CD14-positive monocyte (primary cell): ENCODE measurements at regions of chr16 and their contacts with region 1.

Region 1: GRCh38 chr16:15636392-15636873 is 6.5 kb downstream of the MARF1 start:
- DNase-seq: no peak
- H3K4me3 ChIP-seq: no peak overlapping the region
- H3K4me3 Mint-ChIP-seq: peak overlapping the region in 1 of 2 donors; percentile 16
- H3K27ac ChIP-seq: peak overlapping the region in 1 of 2 donors; percentile 65
- H3K27ac Mint-ChIP-seq: peak overlapping the region in 5 of 7 donors; percentile 14 to 82 (median 47)
- H3K4me1 ChIP-seq: peaks cover 2 to 16% of the 10 kb centered on the region in 2 donors
- H3K4me1 Mint-ChIP-seq: peaks cover 16% of the 10 kb centered on the region
- H3K27me3 ChIP-seq: no peaks in the 10 kb centered on the region
- H3K27me3 Mint-ChIP-seq: no peaks in the 10 kb centered on the region
- CTCF ChIP-seq: no peak

Region 2: DNA sequence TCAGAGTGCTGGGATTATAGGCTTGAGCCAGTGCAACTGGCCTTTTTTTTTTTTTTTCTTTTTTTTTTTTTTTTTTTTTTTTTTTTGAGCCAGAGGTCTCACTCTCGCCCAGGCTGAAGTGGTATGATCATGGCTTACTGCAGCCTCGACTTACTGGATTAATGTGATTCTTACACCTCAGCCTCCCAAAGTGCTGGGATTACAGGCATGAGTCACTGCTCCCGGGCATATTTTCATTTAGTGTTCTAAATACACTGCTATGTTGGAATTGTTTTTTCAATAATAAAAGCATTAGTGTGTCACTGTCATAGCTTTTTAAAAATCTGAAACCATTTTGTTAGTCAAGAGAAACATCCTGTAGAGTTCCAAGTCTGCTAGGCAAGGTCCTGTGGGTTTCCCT is 53.9 kb after region 1 on chr16:
- intact Hi-C with region 1: loop called in 1 of 2 experiments (anchors 10 kb)
- DNase-seq: no peak
- H3K4me3 ChIP-seq: no peak overlapping the region
- H3K4me3 Mint-ChIP-seq: no peak overlapping the region
- H3K27ac ChIP-seq: peak overlapping the region in 1 of 2 donors; percentile 20
- H3K27ac Mint-ChIP-seq: peak overlapping the region in 2 of 7 donors; percentile 40 to 53
- H3K4me1 ChIP-seq: no peaks in the 10 kb centered on the region
- H3K4me1 Mint-ChIP-seq: no peaks in the 10 kb centered on the region
- H3K27me3 ChIP-seq: no peaks in the 10 kb centered on the region
- H3K27me3 Mint-ChIP-seq: peaks cover 0 to 2% (median 1%) of the 10 kb centered on the region in 3 donors
- CTCF ChIP-seq: no peak